CD8-positive, alpha-beta T cell (primary cell): ENCODE measurements at regions of chr12 and their contacts with region 1.

Region 1: GRCh38 chr12:1661553-1662335 is 29.1 kb upstream of the ADIPOR2 start:
- DNase-seq: peak; percentile 63 to 95 (median 78)
- ATAC-seq: peak; percentile 74
- H3K4me3 ChIP-seq: peak overlapping the region; percentile 50 to 52
- H3K4me3 Mint-ChIP-seq: peak overlapping the region; percentile 78
- H3K27ac ChIP-seq: peak overlapping the region in 1 of 2 experiments; percentile 56
- H3K27ac Mint-ChIP-seq: peak overlapping the region; percentile 74
- H3K4me1 ChIP-seq: peaks cover 17% of the 10 kb centered on the region
- H3K4me1 Mint-ChIP-seq: peaks cover 43% of the 10 kb centered on the region
- H3K27me3 ChIP-seq: no peaks in the 10 kb centered on the region
- H3K27me3 Mint-ChIP-seq: no peaks in the 10 kb centered on the region
- CTCF ChIP-seq: no peak

Region 2: GRCh38 chr12:1544996-1545700 is 116.6 kb before region 1 on chr12:
- CTCF ChIA-PET with region 1: no interaction called
- POLR2A ChIA-PET with region 1: no interaction called
- intact Hi-C with region 1: no loop called
- DNase-seq: peak in 1 of 9 experiments; percentile 19
- ATAC-seq: no peak
- H3K4me3 ChIP-seq: no peak overlapping the region
- H3K4me3 Mint-ChIP-seq: no peak overlapping the region
- H3K27ac ChIP-seq: no peak overlapping the region
- H3K27ac Mint-ChIP-seq: no peak overlapping the region
- H3K4me1 ChIP-seq: no peaks in the 10 kb centered on the region
- H3K4me1 Mint-ChIP-seq: no peaks in the 10 kb centered on the region
- H3K27me3 ChIP-seq: peaks cover 2 to 8% of the 10 kb centered on the region in 2 experiments
- H3K27me3 Mint-ChIP-seq: peaks cover 49% of the 10 kb centered on the region
- CTCF ChIP-seq: no peak

Region 3: GRCh38 chr12:1593174-1594005 is 68.4 kb before region 1 on chr12:
- CTCF ChIA-PET with region 1: no interaction called
- POLR2A ChIA-PET with region 1: no interaction called
- intact Hi-C with region 1: no loop called
- DNase-seq: peak in 8 of 9 experiments; percentile 42 to 78 (median 62)
- ATAC-seq: peak; percentile 30
- H3K4me3 ChIP-seq: peak overlapping the region; percentile 66 to 83
- H3K4me3 Mint-ChIP-seq: peak overlapping the region; percentile 92
- H3K27ac ChIP-seq: peak overlapping the region; percentile 34 to 76
- H3K27ac Mint-ChIP-seq: peak overlapping the region; percentile 92
- H3K4me1 ChIP-seq: peaks cover 42% of the 10 kb centered on the region
- H3K4me1 Mint-ChIP-seq: peaks cover 60% of the 10 kb centered on the region
- H3K27me3 ChIP-seq: no peaks in the 10 kb centered on the region
- H3K27me3 Mint-ChIP-seq: no peaks in the 10 kb centered on the region
- CTCF ChIP-seq: no peak

Region 4: GRCh38 chr12:1690578-1691122 is 28.9 kb after region 1 on chr12 and contains the start of gene ADIPOR2:
- CTCF ChIA-PET with region 1: no interaction called
- POLR2A ChIA-PET with region 1: interaction called, 22 read pairs
- intact Hi-C with region 1: loop called (anchors 1 to 2 kb)
- DNase-seq: peak; percentile 88 to 98 (median 94)
- ATAC-seq: peak; percentile 97
- H3K4me3 ChIP-seq: peak within 1 kb of the TSS; percentile 84 to 91
- H3K4me3 Mint-ChIP-seq: peak within 1 kb of the TSS; percentile 92
- H3K27ac ChIP-seq: peak within 1 kb of the TSS; percentile 73 to 94
- H3K27ac Mint-ChIP-seq: peak within 1 kb of the TSS; percentile 99
- H3K4me1 ChIP-seq: peaks cover 20% of the 10 kb centered on the region
- H3K4me1 Mint-ChIP-seq: peaks cover 46% of the 10 kb centered on the region
- H3K27me3 ChIP-seq: no peaks in the 10 kb centered on the region
- H3K27me3 Mint-ChIP-seq: no peaks in the 10 kb centered on the region
- CTCF ChIP-seq: no peak
- total RNA-seq, gene ADIPOR2: 19.4 to 22.5 TPM

Region 5: GRCh38 chr12:2198005-2198501 is 536.3 kb after region 1 on chr12:
- CTCF ChIA-PET with region 1: no interaction called
- POLR2A ChIA-PET with region 1: no interaction called
- intact Hi-C with region 1: no loop called
- DNase-seq: no peak
- ATAC-seq: no peak
- H3K4me3 ChIP-seq: no peak overlapping the region
- H3K4me3 Mint-ChIP-seq: no peak overlapping the region
- H3K27ac ChIP-seq: no peak overlapping the region
- H3K27ac Mint-ChIP-seq: no peak overlapping the region
- H3K4me1 ChIP-seq: no peaks in the 10 kb centered on the region
- H3K4me1 Mint-ChIP-seq: no peaks in the 10 kb centered on the region
- H3K27me3 ChIP-seq: no peaks in the 10 kb centered on the region
- H3K27me3 Mint-ChIP-seq: peaks cover 5% of the 10 kb centered on the region
- CTCF ChIP-seq: no peak